Gastrocnemius medialis (tissue), 4 donors: ENCODE measurements at regions of chr17 and their contacts with region 1.

Region 1: DNA sequence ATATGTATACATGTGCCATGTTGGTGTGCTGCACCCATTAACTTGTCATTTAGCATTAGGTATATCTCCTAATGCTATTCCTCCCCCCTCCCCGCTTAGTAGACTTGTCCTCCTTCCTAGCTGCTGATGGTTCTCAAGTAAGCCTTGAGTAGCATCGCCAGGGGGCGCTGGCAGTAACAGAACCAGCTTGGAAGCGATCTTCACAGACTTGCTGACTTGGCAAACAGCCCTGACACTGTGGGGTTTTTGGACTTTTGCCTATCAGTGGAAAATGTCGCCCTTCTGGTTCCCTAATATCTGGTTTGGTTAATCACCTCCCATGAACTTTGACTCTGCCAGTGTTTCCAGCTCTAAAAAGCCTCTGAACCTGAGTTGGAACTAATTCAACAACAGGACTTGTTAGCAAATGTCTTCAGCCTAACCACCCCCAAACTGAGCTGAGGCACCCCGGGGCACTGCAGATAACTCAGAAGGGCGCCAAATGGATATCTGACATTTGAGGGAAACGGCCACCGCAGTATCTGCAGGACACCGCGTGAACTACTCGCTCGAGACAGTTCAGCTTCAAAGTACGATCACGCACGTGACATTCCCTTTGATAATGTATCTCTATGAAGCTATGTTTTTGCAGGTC is 15.4 kb upstream of the SPATA32 start:
- DNase-seq: peak; percentile 82 to 93
- ATAC-seq: peak; percentile 65 to 74
- H3K4me3 ChIP-seq: no peak overlapping the region
- H3K27ac ChIP-seq: peak overlapping the region; percentile 88 to 100 (median 97)
- H3K4me1 ChIP-seq: peaks cover 46 to 51% of the 10 kb centered on the region in 2 donors
- H3K27me3 ChIP-seq: no peaks in the 10 kb centered on the region
- CTCF ChIP-seq: peak; percentile 81 to 92 (median 91)
- POLR2A ChIP-seq: no peak

Region 2: DNA sequence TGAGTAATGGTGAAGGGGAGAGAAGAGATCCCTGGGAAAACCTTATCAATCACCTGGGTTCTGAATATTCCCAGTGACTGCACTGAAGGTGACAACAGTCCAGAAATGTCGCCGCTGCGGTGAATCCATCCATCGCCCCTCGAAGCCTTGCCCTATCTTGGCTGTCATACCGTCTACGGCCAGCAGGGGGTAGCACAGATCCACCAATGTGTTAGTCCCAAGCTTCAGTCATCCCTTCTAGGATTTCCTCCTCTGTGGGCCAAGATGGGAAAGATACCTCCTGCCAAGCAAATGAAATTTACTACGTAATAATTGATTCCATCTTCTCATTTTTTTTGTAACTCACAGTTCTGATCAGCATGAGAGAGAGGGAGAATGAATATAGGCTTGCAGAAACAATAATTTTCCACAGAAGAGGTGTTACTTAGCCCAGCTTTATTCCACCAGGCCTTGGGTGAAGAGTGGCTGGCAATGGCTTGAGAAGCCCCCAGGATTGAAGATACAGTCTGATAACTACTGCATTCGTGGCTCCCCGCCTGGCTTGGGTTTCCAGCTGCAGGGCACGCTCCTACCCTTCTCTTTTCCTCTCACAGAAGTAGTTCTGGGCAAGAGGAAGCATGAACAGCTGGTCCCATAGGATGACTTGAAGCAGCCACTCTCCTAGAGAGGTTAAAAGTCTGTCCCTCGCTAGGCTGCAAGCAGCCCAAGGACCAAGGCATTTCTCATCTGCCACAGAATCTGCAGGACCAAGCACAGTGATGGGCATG is 58.3 kb before region 1 on chr17:
- in situ Hi-C with region 1: no loop called
- intact Hi-C with region 1: loop called (anchors 2 kb)
- DNase-seq: peak; percentile 60 to 76
- ATAC-seq: peak; percentile 83 to 92
- H3K4me3 ChIP-seq: no peak overlapping the region
- H3K27ac ChIP-seq: no peak overlapping the region
- H3K4me1 ChIP-seq: peaks cover 0 to 4% of the 10 kb centered on the region in 2 donors
- H3K27me3 ChIP-seq: peaks cover 0 to 4% (median 0%) of the 10 kb centered on the region in 3 donors
- CTCF ChIP-seq: peak; percentile 89 to 99 (median 95)
- POLR2A ChIP-seq: no peak

Region 3: GRCh38 chr17:45311760-45312476 is 34.6 kb after region 1 on chr17:
- in situ Hi-C with region 1: loop called in 2 of 4 experiments (anchors 5 kb)
- intact Hi-C with region 1: no loop called
- DNase-seq: peak; percentile 92 to 96
- ATAC-seq: peak; percentile 67 to 72
- H3K4me3 ChIP-seq: peak overlapping the region; percentile 3 to 50 (median 30)
- H3K27ac ChIP-seq: peak overlapping the region; percentile 88 to 98 (median 94)
- H3K4me1 ChIP-seq: peaks cover 86 to 91% of the 10 kb centered on the region in 2 donors
- H3K27me3 ChIP-seq: no peaks in the 10 kb centered on the region
- CTCF ChIP-seq: peak in 1 of 5 experiments; percentile 2
- POLR2A ChIP-seq: peak; percentile 80 to 89

Region 4: GRCh38 chr17:45371414-45372327 is 94.3 kb after region 1 on chr17:
- in situ Hi-C with region 1: loop called in 1 of 4 experiments (anchors 10 kb)
- intact Hi-C with region 1: no loop called
- DNase-seq: peak; percentile 46 to 80
- ATAC-seq: peak; percentile 76 to 86
- H3K4me3 ChIP-seq: peak overlapping the region; percentile 11 to 59 (median 42)
- H3K27ac ChIP-seq: peak overlapping the region; percentile 49 to 82 (median 69)
- H3K4me1 ChIP-seq: peaks cover 15 to 25% of the 10 kb centered on the region in 2 donors
- H3K27me3 ChIP-seq: no peaks in the 10 kb centered on the region
- CTCF ChIP-seq: no peak
- POLR2A ChIP-seq: peak in 1 of 2 donors; percentile 17

Region 5: GRCh38 chr17:45385331-45385997 is 108.1 kb after region 1 on chr17:
- in situ Hi-C with region 1: loop called in 3 of 4 experiments (anchors 5 to 10 kb)
- intact Hi-C with region 1: loop called (anchors 2 kb)
- DNase-seq: peak; percentile 66 to 80
- ATAC-seq: peak; percentile 95 to 99
- H3K4me3 ChIP-seq: no peak overlapping the region
- H3K27ac ChIP-seq: no peak overlapping the region
- H3K4me1 ChIP-seq: peaks cover 0 to 6% of the 10 kb centered on the region in 2 donors
- H3K27me3 ChIP-seq: peaks cover 0 to 7% (median 0%) of the 10 kb centered on the region in 3 donors
- CTCF ChIP-seq: peak; percentile 97 to 100 (median 98)
- POLR2A ChIP-seq: no peak